Right cardiac atrium (tissue), 5 donors: ENCODE measurements at regions of chr1 and their contacts with region 1.

Region 1: DNA sequence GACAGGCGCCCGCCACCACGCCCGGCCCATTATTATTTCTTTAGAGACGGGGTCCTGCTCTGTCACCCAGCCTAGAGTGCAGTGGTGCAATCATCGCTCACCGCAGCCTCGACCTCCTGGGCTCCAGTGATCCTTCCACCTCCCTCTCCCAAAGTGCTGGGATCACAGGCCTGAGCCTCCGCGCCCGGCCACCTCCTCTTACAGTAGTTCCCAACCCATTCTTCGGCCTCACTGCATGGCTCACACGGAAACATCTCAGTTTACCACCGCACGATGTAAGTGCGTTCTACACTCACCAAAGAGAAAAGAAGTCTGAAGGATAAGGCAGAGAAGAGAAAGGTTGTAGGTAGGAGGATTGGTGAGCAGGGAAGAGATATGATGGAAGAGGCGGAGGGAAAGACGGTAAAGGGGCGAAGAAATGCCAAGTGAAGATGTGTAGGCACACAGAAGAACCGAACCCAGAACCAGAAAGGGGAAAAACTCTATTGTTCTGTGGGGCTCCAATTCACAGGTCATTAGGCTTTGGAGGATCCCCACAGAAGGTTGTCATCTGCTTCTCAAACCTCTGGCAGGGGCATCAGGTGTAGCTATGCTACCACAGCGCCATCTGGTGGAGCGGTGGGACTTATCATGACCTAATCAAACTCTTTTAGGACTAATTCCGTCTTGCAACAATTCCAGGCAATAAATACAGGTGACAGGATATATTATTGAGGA is 504.2 kb downstream of the SMYD3 start:
- DNase-seq: peak; percentile 88 to 95 (median 90)
- ATAC-seq: peak; percentile 61 to 77
- H3K4me3 ChIP-seq: no peak overlapping the region
- H3K27ac ChIP-seq: no peak overlapping the region
- H3K4me1 ChIP-seq: no peaks in the 10 kb centered on the region
- H3K27me3 ChIP-seq: no peaks in the 10 kb centered on the region

Region 2: DNA sequence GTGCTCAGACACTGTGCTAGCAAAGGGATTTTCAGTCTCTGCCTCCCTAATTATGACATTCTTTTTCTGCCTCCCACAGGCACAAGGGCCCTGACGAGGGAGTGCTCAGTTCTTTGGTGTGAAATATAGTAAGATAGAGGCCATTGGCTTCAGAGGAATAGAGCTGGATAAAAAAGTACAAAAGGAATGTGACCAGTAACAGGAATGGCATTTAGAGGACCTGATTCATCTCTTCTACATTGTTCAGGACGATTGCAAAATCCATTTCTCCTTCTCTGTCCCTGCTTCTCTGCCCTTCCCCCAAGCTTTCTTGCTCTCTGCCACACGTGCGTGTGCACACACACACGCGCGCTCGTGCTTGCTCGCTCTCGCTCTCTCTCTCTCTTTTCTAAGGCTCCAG is 179.9 kb before region 1 on chr1:
- intact Hi-C with region 1: loop called in 1 of 4 experiments (anchors 10 kb)
- DNase-seq: no peak
- ATAC-seq: peak in 1 of 2 donors; percentile 46
- H3K4me3 ChIP-seq: no peak overlapping the region
- H3K27ac ChIP-seq: no peak overlapping the region
- H3K4me1 ChIP-seq: no peaks in the 10 kb centered on the region
- H3K27me3 ChIP-seq: no peaks in the 10 kb centered on the region

Region 3: DNA sequence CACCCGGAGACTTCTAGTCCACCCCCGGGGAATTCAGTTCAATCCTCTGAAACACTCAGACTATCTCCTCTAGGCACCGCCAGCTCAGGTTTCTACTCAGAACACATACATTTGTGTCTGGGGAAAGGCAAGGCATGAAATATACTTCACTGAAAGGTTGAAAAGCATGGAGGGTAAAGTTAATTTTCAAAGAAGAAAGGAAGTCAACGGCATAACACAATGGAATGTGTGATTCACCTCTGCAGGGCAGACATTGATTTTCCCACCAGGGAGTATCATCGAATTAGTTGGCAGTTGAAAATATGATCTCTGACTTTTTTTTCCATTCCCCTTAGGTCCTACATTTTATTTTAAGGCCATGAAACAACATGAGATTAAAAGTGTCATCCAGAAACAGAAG is 165.2 kb before region 1 on chr1:
- intact Hi-C with region 1: loop called in 1 of 4 experiments (anchors 10 kb)
- DNase-seq: no peak
- ATAC-seq: no peak
- H3K4me3 ChIP-seq: no peak overlapping the region
- H3K27ac ChIP-seq: no peak overlapping the region
- H3K4me1 ChIP-seq: no peaks in the 10 kb centered on the region
- H3K27me3 ChIP-seq: no peaks in the 10 kb centered on the region